Breast epithelium (tissue), 4 donors: ENCODE measurements at regions of chr2 and their contacts with region 1.

Region 1: GRCh38 chr2:183868707-183869106 is 729.6 kb upstream of the ZNF804A start:
- DNase-seq: no peak
- H3K4me3 ChIP-seq: no peak overlapping the region
- H3K27ac ChIP-seq: no peak overlapping the region
- H3K4me1 ChIP-seq: no peaks in the 10 kb centered on the region
- H3K27me3 ChIP-seq: no peaks in the 10 kb centered on the region
- CTCF ChIP-seq: no peak
- POLR2A ChIP-seq: no peak

Region 2: GRCh38 chr2:183840061-183840584 is 28.6 kb before region 1 on chr2:
- intact Hi-C with region 1: loop called (anchors 2 kb)
- DNase-seq: no peak
- H3K4me3 ChIP-seq: no peak overlapping the region
- H3K27ac ChIP-seq: no peak overlapping the region
- H3K4me1 ChIP-seq: no peaks in the 10 kb centered on the region
- H3K27me3 ChIP-seq: no peaks in the 10 kb centered on the region
- CTCF ChIP-seq: no peak
- POLR2A ChIP-seq: no peak

Region 3: GRCh38 chr2:183927406-183928325 is 59.0 kb after region 1 on chr2:
- intact Hi-C with region 1: loop called (anchors 2 kb)
- DNase-seq: no peak
- H3K4me3 ChIP-seq: no peak overlapping the region
- H3K27ac ChIP-seq: peak overlapping the region in 1 of 2 donors; percentile 19
- H3K4me1 ChIP-seq: no peaks in the 10 kb centered on the region
- H3K27me3 ChIP-seq: no peaks in the 10 kb centered on the region
- CTCF ChIP-seq: no peak
- POLR2A ChIP-seq: no peak

Region 4: GRCh38 chr2:184646177-184646576 is 777.5 kb after region 1 on chr2:
- intact Hi-C with region 1: no loop called
- DNase-seq: no peak
- H3K4me3 ChIP-seq: no peak overlapping the region
- H3K27ac ChIP-seq: no peak overlapping the region
- H3K4me1 ChIP-seq: no peaks in the 10 kb centered on the region
- H3K27me3 ChIP-seq: no peaks in the 10 kb centered on the region
- CTCF ChIP-seq: no peak
- POLR2A ChIP-seq: no peak

Region 5: GRCh38 chr2:185291035-185291647 is 1422.4 kb after region 1 on chr2:
- intact Hi-C with region 1: no loop called
- DNase-seq: peak in 1 of 2 donors; percentile 58
- H3K4me3 ChIP-seq: no peak overlapping the region
- H3K27ac ChIP-seq: no peak overlapping the region
- H3K4me1 ChIP-seq: no peaks in the 10 kb centered on the region
- H3K27me3 ChIP-seq: no peaks in the 10 kb centered on the region
- CTCF ChIP-seq: peak in 2 of 3 donors; percentile 22 to 55
- POLR2A ChIP-seq: no peak